ENCODE measurements at regions of chr12 and their contacts with region 1.

Region 1: DNA sequence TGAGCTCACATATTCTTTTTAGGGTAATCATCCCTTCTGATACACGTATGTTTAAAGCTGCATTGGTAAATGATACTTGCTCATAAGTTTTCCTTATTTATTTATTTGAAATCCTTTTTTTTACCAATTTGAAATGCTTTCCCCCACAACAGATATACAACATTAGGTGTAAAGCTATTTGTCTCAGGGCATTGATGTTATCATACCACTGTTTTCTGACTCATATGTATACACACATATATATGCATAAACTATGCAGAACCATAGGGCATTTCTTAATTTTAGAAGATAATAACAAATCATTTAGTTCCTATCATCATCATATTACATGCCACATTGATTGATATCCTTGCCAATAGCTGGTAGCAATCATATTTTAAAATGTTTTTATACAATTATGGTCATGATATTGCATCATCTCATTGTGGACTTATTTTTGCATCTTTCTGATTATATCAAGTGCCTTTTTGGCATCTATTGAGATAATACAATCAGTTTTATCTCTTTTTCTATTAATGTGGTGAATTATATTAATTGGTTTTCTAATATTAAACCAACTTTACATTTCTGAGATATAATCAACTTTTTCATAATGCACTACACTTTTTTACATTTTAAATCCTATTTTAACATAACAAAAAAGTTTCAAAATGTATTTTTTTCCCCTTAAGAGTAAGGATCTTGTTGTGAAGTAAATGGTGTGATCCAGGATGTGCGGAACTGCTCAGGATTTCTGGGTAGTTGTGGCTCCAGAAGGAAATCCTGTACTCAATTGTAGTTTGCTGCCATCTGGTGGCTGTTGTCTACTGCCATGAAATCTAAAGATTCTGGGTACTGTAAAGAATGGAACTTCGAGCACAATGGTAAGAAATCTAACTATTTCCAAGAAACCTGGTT is 16.7 kb downstream of the OR9K2 start:
- DNase-seq: peak; percentile 9
- H3K4me3 Mint-ChIP-seq: no peak overlapping the region
- H3K27ac Mint-ChIP-seq: no peak overlapping the region
- H3K4me1 Mint-ChIP-seq: no peaks in the 10 kb centered on the region
- H3K27me3 Mint-ChIP-seq: peaks cover 5% of the 10 kb centered on the region

Region 2: GRCh38 chr12:54853995-54854566 is 288.8 kb before region 1 on chr12 and contains the start of gene MUCL1:
- intact Hi-C with region 1: loop called (anchors 5 kb)
- DNase-seq: peak; percentile 66
- H3K4me3 Mint-ChIP-seq: no peak within 1 kb of the TSS
- H3K27ac Mint-ChIP-seq: no peak within 1 kb of the TSS
- H3K4me1 Mint-ChIP-seq: peaks cover 15% of the 10 kb centered on the region
- H3K27me3 Mint-ChIP-seq: peaks cover 1% of the 10 kb centered on the region
- total RNA-seq, gene MUCL1: not detected in 2 replicates